A673 (cell line): ENCODE measurements at regions of chr20 and their contacts with region 1.

Region 1: GRCh38 chr20:45293041-45294002 is 13.3 kb upstream of the RBPJL start:
- DNase-seq: peak; percentile 86
- H3K4me3 ChIP-seq: peak overlapping the region; percentile 56
- H3K27ac ChIP-seq: peak overlapping the region; percentile 55
- H3K4me1 ChIP-seq: peaks cover 9% of the 10 kb centered on the region
- H3K27me3 ChIP-seq: peaks cover 9% of the 10 kb centered on the region
- CTCF ChIP-seq: peak; percentile 93

Region 2: DNA sequence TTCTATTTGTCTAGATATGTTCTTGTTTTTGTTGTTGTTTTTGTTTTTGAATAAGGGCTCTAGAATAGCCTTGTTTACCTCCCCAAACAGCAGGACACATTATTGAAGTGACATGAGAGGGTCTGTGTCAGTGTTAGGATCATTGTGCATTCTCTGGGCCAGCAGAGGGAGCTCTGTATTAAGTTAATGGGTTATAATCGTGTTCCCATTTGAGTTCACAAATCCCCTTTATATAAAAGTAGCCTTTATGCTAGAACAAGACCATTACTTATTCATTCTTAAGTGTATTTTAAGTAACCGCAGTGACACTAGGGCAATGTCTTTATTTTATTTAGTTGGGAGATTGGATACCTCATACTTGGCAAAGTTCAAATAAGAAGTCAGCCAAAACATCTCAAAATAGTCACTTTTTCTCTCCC is 282.2 kb before region 1 on chr20:
- CTCF ChIA-PET with region 1: interaction called, 5 read pairs
- POLR2A ChIA-PET with region 1: no interaction called
- intact Hi-C with region 1: loop called (anchors 5 kb)
- DNase-seq: peak; percentile 74
- H3K4me3 ChIP-seq: no peak overlapping the region
- H3K27ac ChIP-seq: no peak overlapping the region
- H3K4me1 ChIP-seq: no peaks in the 10 kb centered on the region
- H3K27me3 ChIP-seq: no peaks in the 10 kb centered on the region
- CTCF ChIP-seq: peak; percentile 89

Region 3: DNA sequence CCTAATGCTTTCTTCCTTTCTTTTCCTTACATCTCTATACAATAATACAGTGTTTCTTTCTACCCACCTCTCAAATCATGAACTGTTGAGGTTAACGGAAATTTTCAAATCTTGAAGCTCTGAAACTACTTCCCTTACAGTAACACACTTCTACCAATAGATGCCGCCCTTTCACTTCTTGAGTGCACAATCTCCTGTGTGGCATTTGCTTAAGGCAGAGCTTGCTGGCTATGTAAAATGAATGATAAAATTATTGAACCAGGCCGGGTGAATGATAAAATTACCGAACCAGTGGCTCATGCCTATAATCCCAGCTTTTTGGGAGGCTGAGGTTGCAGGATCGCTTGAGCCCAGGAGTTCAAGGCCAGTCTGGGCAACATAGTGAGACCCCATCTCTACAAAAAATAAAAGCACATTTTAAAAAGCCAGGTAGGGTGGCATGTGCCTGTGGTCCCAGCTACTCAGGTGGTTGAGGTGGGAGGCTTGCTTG is 249.2 kb before region 1 on chr20:
- CTCF ChIA-PET with region 1: interaction called, 16 read pairs
- POLR2A ChIA-PET with region 1: interaction called, 4 read pairs
- intact Hi-C with region 1: loop called (anchors 1 kb)
- DNase-seq: peak; percentile 87
- H3K4me3 ChIP-seq: no peak overlapping the region
- H3K27ac ChIP-seq: no peak overlapping the region
- H3K4me1 ChIP-seq: no peaks in the 10 kb centered on the region
- H3K27me3 ChIP-seq: no peaks in the 10 kb centered on the region
- CTCF ChIP-seq: peak; percentile 92

Region 4: GRCh38 chr20:45095753-45096371 is 197.5 kb before region 1 on chr20:
- CTCF ChIA-PET with region 1: interaction called, 11 read pairs
- POLR2A ChIA-PET with region 1: no interaction called
- intact Hi-C with region 1: no loop called
- DNase-seq: peak; percentile 72
- H3K4me3 ChIP-seq: no peak overlapping the region
- H3K27ac ChIP-seq: no peak overlapping the region
- H3K4me1 ChIP-seq: no peaks in the 10 kb centered on the region
- H3K27me3 ChIP-seq: no peaks in the 10 kb centered on the region
- CTCF ChIP-seq: peak; percentile 78

Region 5: DNA sequence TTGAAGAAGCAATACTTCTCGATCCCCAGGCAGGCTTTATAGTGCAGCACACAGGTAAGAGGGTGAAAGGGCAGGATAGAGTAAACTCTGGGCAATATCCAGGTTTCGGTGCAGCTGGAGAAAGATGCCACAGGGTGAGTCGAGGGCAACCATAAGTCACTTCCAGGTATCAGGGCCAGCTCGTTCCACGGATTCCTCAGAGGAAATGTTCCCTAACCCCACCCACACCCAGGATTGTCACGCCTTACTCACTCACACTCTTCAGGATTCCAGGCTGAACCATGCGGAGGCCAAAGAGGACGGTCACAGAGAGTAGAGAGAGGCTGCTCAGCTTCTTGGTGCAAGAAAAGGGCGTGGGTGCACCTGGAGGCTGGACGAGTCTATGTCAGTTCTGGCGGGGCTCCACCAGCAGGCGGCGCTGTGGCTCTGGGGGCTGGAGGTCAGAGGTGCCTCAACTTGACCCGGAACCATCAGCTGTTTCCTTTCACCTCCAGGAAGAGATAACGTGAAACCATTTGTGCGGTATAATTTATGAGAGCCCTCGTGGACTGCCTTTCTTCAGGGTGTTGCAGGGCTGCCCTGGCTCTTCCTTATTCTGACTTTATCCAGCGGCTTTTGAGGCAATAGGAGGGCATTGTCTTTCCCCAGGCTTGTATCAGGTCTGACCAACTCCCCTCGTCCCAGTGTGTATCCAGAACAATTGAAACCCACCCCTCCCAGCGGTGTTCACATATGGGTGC is 154.6 kb before region 1 on chr20:
- CTCF ChIA-PET with region 1: interaction called, 7 read pairs
- POLR2A ChIA-PET with region 1: no interaction called
- intact Hi-C with region 1: loop called (anchors 2 kb)
- DNase-seq: peak; percentile 60
- H3K4me3 ChIP-seq: no peak overlapping the region
- H3K27ac ChIP-seq: no peak overlapping the region
- H3K4me1 ChIP-seq: no peaks in the 10 kb centered on the region
- H3K27me3 ChIP-seq: peaks cover 12% of the 10 kb centered on the region
- CTCF ChIP-seq: peak; percentile 96